ENCODE measurements at regions of chr2 and their contacts with region 1.

Region 1: GRCh38 chr2:75064691-75065396 is 106.4 kb downstream of the POLE4 start:
- DNase-seq: peak; percentile 66
- H3K4me3 Mint-ChIP-seq: no peak overlapping the region
- H3K27ac Mint-ChIP-seq: no peak overlapping the region
- H3K4me1 Mint-ChIP-seq: no peaks in the 10 kb centered on the region
- H3K27me3 Mint-ChIP-seq: no peaks in the 10 kb centered on the region
- CTCF ChIP-seq: peak; percentile 85

Region 2: GRCh38 chr2:74985978-74986609 is 78.8 kb before region 1 on chr2:
- CTCF ChIA-PET with region 1: no interaction called
- POLR2A ChIA-PET with region 1: no interaction called
- intact Hi-C with region 1: no loop called
- DNase-seq: no peak
- H3K4me3 Mint-ChIP-seq: no peak overlapping the region
- H3K27ac Mint-ChIP-seq: no peak overlapping the region
- H3K4me1 Mint-ChIP-seq: no peaks in the 10 kb centered on the region
- H3K27me3 Mint-ChIP-seq: no peaks in the 10 kb centered on the region
- CTCF ChIP-seq: no peak

Region 3: DNA sequence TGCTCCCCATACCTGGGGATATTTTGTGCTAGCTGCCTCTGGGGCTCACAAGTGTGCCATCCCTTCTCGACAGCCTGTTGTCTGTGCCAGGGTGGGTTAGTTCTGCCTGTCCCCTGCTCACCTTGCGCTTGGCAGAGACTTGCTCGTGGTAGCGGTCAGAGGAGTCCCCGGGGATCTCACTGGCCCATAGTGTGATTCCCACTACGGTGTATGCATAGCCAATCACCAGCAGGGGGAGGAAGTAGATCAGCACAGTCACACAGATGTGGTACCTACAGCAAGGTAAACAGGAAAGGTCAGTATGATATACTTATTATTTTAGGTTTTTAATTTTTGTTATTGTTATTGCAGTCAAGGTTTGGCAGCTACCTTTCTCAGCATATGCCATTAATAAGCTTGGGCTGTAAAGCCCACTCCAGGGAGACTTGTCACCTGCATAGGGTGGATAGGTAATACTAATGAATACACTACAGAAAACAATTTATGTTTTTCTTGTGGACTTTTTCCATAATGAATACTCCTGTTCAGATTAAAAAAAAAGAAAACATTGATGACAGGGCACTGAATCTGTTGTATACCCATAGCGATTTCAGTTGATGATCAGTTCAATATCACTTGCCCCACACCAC is 11.2 kb before region 1 on chr2:
- CTCF ChIA-PET with region 1: interaction called, 15 read pairs
- POLR2A ChIA-PET with region 1: no interaction called
- intact Hi-C with region 1: no loop called
- DNase-seq: peak; percentile 62
- H3K4me3 Mint-ChIP-seq: no peak overlapping the region
- H3K27ac Mint-ChIP-seq: no peak overlapping the region
- H3K4me1 Mint-ChIP-seq: no peaks in the 10 kb centered on the region
- H3K27me3 Mint-ChIP-seq: no peaks in the 10 kb centered on the region
- CTCF ChIP-seq: peak; percentile 78

Region 4: GRCh38 chr2:75076088-75076487 is 11.2 kb after region 1 on chr2:
- CTCF ChIA-PET with region 1: interaction called, 54 read pairs
- POLR2A ChIA-PET with region 1: no interaction called
- intact Hi-C with region 1: no loop called
- DNase-seq: no peak
- H3K4me3 Mint-ChIP-seq: no peak overlapping the region
- H3K27ac Mint-ChIP-seq: no peak overlapping the region
- H3K4me1 Mint-ChIP-seq: no peaks in the 10 kb centered on the region
- H3K27me3 Mint-ChIP-seq: no peaks in the 10 kb centered on the region
- CTCF ChIP-seq: no peak

Region 5: DNA sequence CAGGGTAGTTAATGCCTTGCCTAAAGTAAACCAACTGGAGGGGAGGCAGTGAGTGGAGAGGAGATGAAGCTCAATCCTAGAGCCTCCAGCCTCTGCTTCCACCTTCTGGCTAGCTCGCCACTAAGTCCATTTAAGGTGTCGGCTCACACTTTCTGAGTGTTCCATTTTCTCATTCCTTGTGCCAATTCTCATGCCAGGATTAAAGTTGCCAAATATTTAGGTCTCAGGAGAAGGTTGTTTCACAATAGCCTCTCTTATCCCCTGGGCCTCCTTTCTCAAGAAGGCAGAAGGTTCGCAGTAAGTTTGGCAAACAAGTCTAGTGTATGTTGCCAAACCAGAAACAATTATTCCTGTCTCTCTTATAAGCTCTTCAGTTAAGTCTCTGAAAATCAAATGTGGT is 77.2 kb after region 1 on chr2:
- CTCF ChIA-PET with region 1: interaction called, 19 read pairs
- POLR2A ChIA-PET with region 1: no interaction called
- intact Hi-C with region 1: no loop called
- DNase-seq: peak; percentile 94
- H3K4me3 Mint-ChIP-seq: no peak overlapping the region
- H3K27ac Mint-ChIP-seq: peak overlapping the region; percentile 72
- H3K4me1 Mint-ChIP-seq: peaks cover 9% of the 10 kb centered on the region
- H3K27me3 Mint-ChIP-seq: no peaks in the 10 kb centered on the region
- CTCF ChIP-seq: no peak

Region 6: GRCh38 chr2:75241696-75242095 is 176.9 kb after region 1 on chr2:
- CTCF ChIA-PET with region 1: interaction called, 45 read pairs
- POLR2A ChIA-PET with region 1: interaction called, 3 read pairs
- intact Hi-C with region 1: loop called (anchors 1 kb)
- DNase-seq: peak; percentile 40
- H3K4me3 Mint-ChIP-seq: no peak overlapping the region
- H3K27ac Mint-ChIP-seq: no peak overlapping the region
- H3K4me1 Mint-ChIP-seq: peaks cover 9% of the 10 kb centered on the region
- H3K27me3 Mint-ChIP-seq: no peaks in the 10 kb centered on the region
- CTCF ChIP-seq: no peak

Region 7: DNA sequence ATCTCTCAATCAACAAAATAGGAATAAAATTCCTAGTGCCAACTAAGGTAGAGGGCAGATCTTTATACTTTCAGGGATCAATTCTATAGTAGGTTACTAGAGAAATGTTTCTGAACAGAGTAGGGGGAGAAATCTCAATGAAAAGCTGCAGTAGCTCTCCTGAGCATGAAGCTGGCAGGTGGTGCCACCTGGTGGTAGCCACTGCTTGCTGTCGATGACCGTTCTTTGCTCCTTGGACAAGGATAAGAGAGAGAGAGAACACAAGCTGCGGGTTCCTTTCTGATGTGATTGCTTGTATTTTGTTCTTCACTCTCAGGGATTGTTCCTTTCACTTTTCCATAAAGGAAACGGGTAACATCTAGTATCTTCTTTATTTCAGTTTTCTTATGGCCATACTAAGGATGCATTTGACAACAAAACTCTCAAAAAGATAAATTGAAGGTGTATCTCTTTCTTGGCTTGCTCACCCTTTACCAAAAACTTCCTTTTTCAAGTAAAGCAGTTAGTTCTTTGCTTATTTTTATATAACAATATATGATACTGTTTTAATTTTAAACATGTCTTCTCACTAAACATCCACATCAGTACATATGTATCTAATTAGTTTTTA is 563.2 kb after region 1 on chr2:
- CTCF ChIA-PET with region 1: interaction called, 4 read pairs
- POLR2A ChIA-PET with region 1: no interaction called
- intact Hi-C with region 1: loop called (anchors 5 kb)
- DNase-seq: peak; percentile 79
- H3K4me3 Mint-ChIP-seq: no peak overlapping the region
- H3K27ac Mint-ChIP-seq: no peak overlapping the region
- H3K4me1 Mint-ChIP-seq: peaks cover 7% of the 10 kb centered on the region
- H3K27me3 Mint-ChIP-seq: no peaks in the 10 kb centered on the region
- CTCF ChIP-seq: peak; percentile 90